Body of pancreas (tissue), 4 donors: ENCODE measurements at regions of chr6 and their contacts with region 1.

Region 1: GRCh38 chr6:133512410-133513016 is 271.4 kb downstream of the EYA4 start:
- DNase-seq: peak; percentile 34 to 63 (median 60)
- ATAC-seq: no peak
- H3K4me3 ChIP-seq: no peak overlapping the region
- H3K27ac ChIP-seq: no peak overlapping the region
- H3K4me1 ChIP-seq: no peaks in the 10 kb centered on the region
- H3K27me3 ChIP-seq: peaks cover 0 to 7% of the 10 kb centered on the region in 2 donors
- CTCF ChIP-seq: peak in 6 of 7 experiments; percentile 48 to 73 (median 70)
- POLR2A ChIP-seq: no peak

Region 2: DNA sequence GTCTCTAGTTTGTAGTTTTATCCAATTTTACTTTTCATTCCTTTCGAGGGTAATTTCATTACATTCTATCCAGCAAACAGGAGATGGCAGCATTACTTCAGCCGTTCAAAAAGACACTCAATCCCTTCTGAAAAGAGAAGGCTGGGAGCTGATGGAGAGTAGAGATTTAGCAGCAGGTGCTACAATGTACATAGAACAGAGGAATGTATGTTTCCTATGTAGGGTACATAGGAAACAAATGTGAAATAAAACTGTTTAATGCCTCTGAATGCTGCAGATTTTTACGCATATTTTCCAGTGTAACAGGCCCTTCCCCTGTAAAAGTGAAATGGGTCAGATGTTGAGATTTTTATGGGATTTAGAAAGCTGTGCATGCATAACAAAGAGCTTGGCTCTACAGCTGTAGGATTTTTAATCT is 682.2 kb before region 1 on chr6:
- intact Hi-C with region 1: loop called (anchors 10 kb)
- DNase-seq: no peak
- ATAC-seq: no peak
- H3K4me3 ChIP-seq: no peak overlapping the region
- H3K27ac ChIP-seq: no peak overlapping the region
- H3K4me1 ChIP-seq: no peaks in the 10 kb centered on the region
- H3K27me3 ChIP-seq: no peaks in the 10 kb centered on the region
- CTCF ChIP-seq: peak in 6 of 7 experiments; percentile 18 to 54 (median 41)
- POLR2A ChIP-seq: no peak

Region 3: DNA sequence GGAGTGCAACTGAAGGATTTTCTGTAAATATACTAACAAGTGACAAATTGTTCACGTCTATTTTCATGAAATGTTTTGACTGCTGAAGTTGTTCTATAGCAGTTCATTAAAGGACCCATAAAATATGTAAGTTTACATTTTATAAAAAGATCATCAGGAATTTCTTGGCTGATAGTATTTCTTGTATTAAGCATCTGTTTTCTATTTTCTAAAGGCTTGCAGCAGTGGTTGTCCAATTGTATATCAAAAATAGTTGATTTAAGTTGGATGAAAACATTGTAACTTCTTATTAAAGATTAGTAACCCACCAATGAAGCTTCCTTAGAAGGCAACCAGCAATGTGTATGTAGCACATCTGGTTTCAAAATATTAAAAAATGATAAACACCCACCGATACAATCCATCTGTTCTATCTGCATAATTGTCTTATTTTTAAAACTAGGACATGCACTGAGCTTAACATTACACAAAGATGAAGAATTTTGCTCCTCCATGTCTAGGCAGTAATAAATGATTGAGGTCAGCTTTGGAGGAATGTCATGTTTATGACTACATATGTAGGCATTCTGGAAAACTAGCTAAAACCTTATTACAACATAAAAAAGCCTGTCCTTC is 75.1 kb after region 1 on chr6:
- intact Hi-C with region 1: no loop called
- DNase-seq: no peak
- ATAC-seq: no peak
- H3K4me3 ChIP-seq: no peak overlapping the region
- H3K27ac ChIP-seq: no peak overlapping the region
- H3K4me1 ChIP-seq: no peaks in the 10 kb centered on the region
- H3K27me3 ChIP-seq: no peaks in the 10 kb centered on the region
- CTCF ChIP-seq: no peak
- POLR2A ChIP-seq: no peak